ENCODE measurements at regions of chr20 and their contacts with region 1.

Region 1: DNA sequence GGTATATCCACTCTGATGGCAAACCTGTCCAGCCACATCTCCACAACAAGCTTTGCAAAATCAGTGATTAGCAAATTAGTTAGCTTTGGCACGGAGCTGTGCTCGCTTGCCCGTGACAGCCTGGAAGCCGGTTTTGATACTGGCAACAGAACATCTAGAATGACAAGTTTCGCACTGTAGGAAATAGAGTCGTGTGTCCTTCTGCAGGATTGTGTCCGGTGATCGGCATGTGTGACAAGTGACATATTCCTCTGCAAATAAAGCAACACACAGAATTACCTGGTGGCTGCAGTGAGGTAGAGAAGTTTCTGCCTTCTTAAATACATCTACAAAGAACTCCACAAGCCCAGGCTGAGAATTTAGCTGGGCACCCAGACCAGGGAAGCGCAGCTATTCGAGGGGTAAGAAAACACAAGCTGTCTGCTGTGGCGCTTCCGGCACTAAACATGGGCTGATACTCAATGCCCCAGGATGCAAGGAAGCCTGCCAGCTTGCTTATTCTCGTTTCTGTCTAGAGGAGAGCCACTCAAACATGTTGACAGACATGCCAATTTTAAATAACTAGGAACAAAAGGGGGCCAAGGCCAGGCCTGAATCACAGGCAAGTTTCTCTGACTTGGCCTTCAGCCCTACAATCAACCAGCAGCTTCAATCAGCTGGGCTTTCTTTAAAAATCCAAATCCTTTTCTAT is 22.2 kb downstream of the EIF2S2 start:
- DNase-seq: no peak
- ATAC-seq: no peak
- H3K4me3 ChIP-seq: no peak overlapping the region
- H3K4me3 Mint-ChIP-seq: no peak overlapping the region
- H3K27ac ChIP-seq: no peak overlapping the region
- H3K27ac Mint-ChIP-seq: peak overlapping the region; percentile 7 to 31
- H3K4me1 ChIP-seq: no peaks in the 10 kb centered on the region
- H3K4me1 Mint-ChIP-seq: peaks cover 5 to 17% (median 14%) of the 10 kb centered on the region in 3 donors
- H3K27me3 ChIP-seq: no peaks in the 10 kb centered on the region
- H3K27me3 Mint-ChIP-seq: no peaks in the 10 kb centered on the region

Region 2: GRCh38 chr20:33862709-33863403 is 226.9 kb before region 1 on chr20:
- CTCF ChIA-PET with region 1: no interaction called
- POLR2A ChIA-PET with region 1: interaction called in 1 of 2 experiments, 10 read pairs
- DNase-seq: peak in 31 of 35 experiments; percentile 10 to 61 (median 30)
- ATAC-seq: peak in 2 of 4 experiments; percentile 31 to 63
- H3K4me3 ChIP-seq: no peak overlapping the region
- H3K4me3 Mint-ChIP-seq: no peak overlapping the region
- H3K27ac ChIP-seq: no peak overlapping the region
- H3K27ac Mint-ChIP-seq: no peak overlapping the region
- H3K4me1 ChIP-seq: peaks cover 9 to 31% of the 10 kb centered on the region in 2 experiments
- H3K4me1 Mint-ChIP-seq: peaks cover 20 to 26% (median 25%) of the 10 kb centered on the region in 3 donors
- H3K27me3 ChIP-seq: peaks cover 0 to 5% of the 10 kb centered on the region in 2 experiments
- H3K27me3 Mint-ChIP-seq: no peaks in the 10 kb centered on the region